HEK293 (cell line): ENCODE measurements at regions of chr11 and their contacts with region 1.

Region 1: GRCh38 chr11:9363954-9364912 is 20.2 kb upstream of the IPO7 start:
- H3K4me3 ChIP-seq: peak overlapping the region; percentile 57
- H3K27ac ChIP-seq: peak overlapping the region; percentile 85
- H3K4me1 ChIP-seq: no peaks in the 10 kb centered on the region
- CTCF ChIP-seq: peak; percentile 42; the same call in 1 of the 2 replicates

Region 2: GRCh38 chr11:9314291-9315036 is 49.8 kb before region 1 on chr11 and contains the start of gene TMEM41B:
- CTCF ChIA-PET with region 1: interaction called, 3 read pairs
- POLR2A ChIA-PET with region 1: interaction called, 11 read pairs
- H3K4me3 ChIP-seq: peak within 1 kb of the TSS; percentile 99
- H3K27ac ChIP-seq: peak within 1 kb of the TSS; percentile 65
- H3K4me1 ChIP-seq: no peaks in the 10 kb centered on the region
- CTCF ChIP-seq: no peak; the same call in none of the 2 replicates

Region 3: DNA sequence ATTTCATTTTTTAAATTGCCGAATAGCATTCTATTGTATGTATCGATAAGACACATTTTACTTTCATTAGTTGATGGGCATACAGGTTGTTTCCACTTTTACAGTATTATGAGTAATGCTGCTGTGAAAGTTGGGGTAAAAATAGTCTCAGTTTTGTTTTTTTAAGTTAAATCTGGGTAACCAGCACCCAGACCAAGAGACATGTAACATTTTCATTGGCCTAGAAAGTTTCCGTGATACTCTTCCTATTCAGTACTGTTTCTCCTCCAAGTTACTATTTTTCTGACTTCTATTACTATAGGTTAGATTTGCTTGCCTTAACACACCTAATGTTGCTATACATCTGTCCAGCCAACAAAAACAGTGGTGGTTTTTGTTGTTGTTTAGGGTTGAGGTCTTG is 32.5 kb after region 1 on chr11:
- CTCF ChIA-PET with region 1: no interaction called
- POLR2A ChIA-PET with region 1: no interaction called
- H3K4me3 ChIP-seq: no peak overlapping the region
- H3K27ac ChIP-seq: no peak overlapping the region
- H3K4me1 ChIP-seq: peaks cover 2% of the 10 kb centered on the region; the same call in 1 of the 2 replicates
- CTCF ChIP-seq: no peak

Region 4: GRCh38 chr11:9428706-9429105 is 64.5 kb after region 1 on chr11:
- CTCF ChIA-PET with region 1: no interaction called
- POLR2A ChIA-PET with region 1: no interaction called
- H3K4me3 ChIP-seq: no peak overlapping the region
- H3K27ac ChIP-seq: no peak overlapping the region
- H3K4me1 ChIP-seq: no peaks in the 10 kb centered on the region
- CTCF ChIP-seq: no peak